MCF 10A (cell line): ENCODE measurements at regions of chr11 and their contacts with region 1.

Region 1: GRCh38 chr11:92276773-92277172 is 52.2 kb downstream of the FAT3 start:
- DNase-seq: peak; percentile 11
- H3K4me3 Mint-ChIP-seq: no peak overlapping the region
- H3K27ac Mint-ChIP-seq: no peak overlapping the region
- H3K4me1 Mint-ChIP-seq: peaks cover 11% of the 10 kb centered on the region
- H3K27me3 Mint-ChIP-seq: no peaks in the 10 kb centered on the region
- CTCF ChIP-seq: no peak

Region 2: GRCh38 chr11:92253945-92254344 is 22.8 kb before region 1 on chr11:
- CTCF ChIA-PET with region 1: no interaction called
- POLR2A ChIA-PET with region 1: no interaction called
- intact Hi-C with region 1: loop called (anchors 1 kb)
- DNase-seq: no peak
- H3K4me3 Mint-ChIP-seq: no peak overlapping the region
- H3K27ac Mint-ChIP-seq: no peak overlapping the region
- H3K4me1 Mint-ChIP-seq: no peaks in the 10 kb centered on the region
- H3K27me3 Mint-ChIP-seq: no peaks in the 10 kb centered on the region
- CTCF ChIP-seq: no peak